ENCODE measurements at regions of chr11 and their contacts with region 1.

Region 1: DNA sequence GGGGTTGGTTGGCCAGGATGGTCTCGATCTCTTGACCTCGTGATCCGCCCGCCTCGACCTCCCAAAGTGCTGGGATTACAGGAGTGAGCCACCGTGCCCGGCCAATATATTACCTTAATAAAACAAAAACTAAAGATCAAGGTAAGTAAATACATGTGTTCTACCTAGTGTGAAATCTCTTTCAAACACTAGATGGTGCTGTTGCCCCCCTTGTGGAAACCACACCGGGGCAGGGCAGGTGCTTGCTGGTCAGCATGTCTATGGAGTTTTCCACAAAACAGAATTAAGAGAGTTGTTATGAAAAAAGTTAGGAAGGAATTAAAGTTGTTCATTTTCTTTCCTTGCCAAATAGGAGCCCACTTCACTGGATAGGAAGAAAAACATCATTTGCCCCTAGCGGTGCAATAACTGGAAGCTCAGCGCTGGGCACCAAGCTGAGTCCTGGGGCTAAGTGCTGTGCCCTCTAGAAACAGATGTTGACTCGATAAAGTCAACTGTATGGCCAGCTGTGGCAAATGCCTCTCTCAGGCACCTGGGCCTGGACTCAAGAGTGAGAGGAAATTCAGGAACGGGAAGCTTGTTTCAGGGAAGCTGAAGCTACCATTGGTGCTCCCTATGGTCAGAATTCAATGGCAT is 6.3 kb upstream of the KCNJ5 start:
- DNase-seq: peak; percentile 56 to 66
- ATAC-seq: peak; percentile 83 to 92
- H3K4me3 ChIP-seq: no peak overlapping the region
- H3K27ac ChIP-seq: no peak overlapping the region
- H3K4me1 ChIP-seq: no peaks in the 10 kb centered on the region
- CTCF ChIP-seq: peak; percentile 65
- EP300 ChIP-seq: no peak
- POLR2A ChIP-seq: no peak
- RAD21 ChIP-seq: peak; percentile 86 to 93

Region 2: GRCh38 chr11:128874427-128874826 is 10.4 kb before region 1 on chr11:
- CTCF ChIA-PET with region 1: interaction called, 20 read pairs
- POLR2A ChIA-PET with region 1: no interaction called
- DNase-seq: no peak
- ATAC-seq: no peak
- H3K4me3 ChIP-seq: no peak overlapping the region
- H3K27ac ChIP-seq: no peak overlapping the region
- H3K4me1 ChIP-seq: no peaks in the 10 kb centered on the region
- CTCF ChIP-seq: no peak
- EP300 ChIP-seq: no peak
- POLR2A ChIP-seq: no peak
- RAD21 ChIP-seq: no peak

Region 3: DNA sequence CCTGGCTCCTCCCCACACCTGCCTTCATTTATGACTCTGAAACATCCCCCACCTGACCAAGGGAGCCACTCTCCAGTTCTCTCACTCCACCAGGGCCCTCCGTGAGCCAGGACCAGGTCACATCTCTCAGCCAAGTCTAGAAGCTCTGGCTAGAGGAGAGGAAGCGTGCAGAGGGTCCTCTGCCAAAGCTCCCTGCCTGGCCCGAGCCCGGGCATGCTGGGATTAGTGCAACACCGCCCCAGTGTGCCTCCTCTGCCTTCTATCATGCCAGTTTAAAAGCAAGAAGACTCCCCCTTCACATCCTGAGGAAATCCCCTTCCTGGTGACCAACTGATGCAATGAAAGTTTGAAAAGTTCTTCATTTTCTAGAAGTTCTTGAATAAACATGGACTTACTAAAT is 34.4 kb after region 1 on chr11:
- CTCF ChIA-PET with region 1: interaction called, 25 read pairs
- POLR2A ChIA-PET with region 1: no interaction called
- DNase-seq: no peak
- ATAC-seq: no peak
- H3K4me3 ChIP-seq: no peak overlapping the region
- H3K27ac ChIP-seq: no peak overlapping the region
- H3K4me1 ChIP-seq: no peaks in the 10 kb centered on the region
- CTCF ChIP-seq: no peak
- EP300 ChIP-seq: no peak
- POLR2A ChIP-seq: no peak
- RAD21 ChIP-seq: no peak

Region 4: GRCh38 chr11:128948589-128948988 is 63.8 kb after region 1 on chr11:
- CTCF ChIA-PET with region 1: interaction called, 26 read pairs
- POLR2A ChIA-PET with region 1: no interaction called
- DNase-seq: no peak
- ATAC-seq: peak; percentile 50 to 54; a peak in 3 of 6 replicates
- H3K4me3 ChIP-seq: no peak overlapping the region
- H3K27ac ChIP-seq: no peak overlapping the region
- H3K4me1 ChIP-seq: no peaks in the 10 kb centered on the region
- CTCF ChIP-seq: no peak
- EP300 ChIP-seq: no peak
- POLR2A ChIP-seq: no peak
- RAD21 ChIP-seq: peak in 1 of 2 experiments; percentile 32; a peak in 1 of 5 replicates

Region 5: GRCh38 chr11:128962896-128963295 is 78.1 kb after region 1 on chr11:
- CTCF ChIA-PET with region 1: interaction called, 123 read pairs
- POLR2A ChIA-PET with region 1: no interaction called
- DNase-seq: no peak
- ATAC-seq: no peak
- H3K4me3 ChIP-seq: no peak overlapping the region
- H3K27ac ChIP-seq: no peak overlapping the region
- H3K4me1 ChIP-seq: no peaks in the 10 kb centered on the region
- CTCF ChIP-seq: no peak
- EP300 ChIP-seq: no peak
- POLR2A ChIP-seq: no peak
- RAD21 ChIP-seq: no peak

Measured in A549 (cell line).